Esophagus muscularis mucosa (tissue), 4 donors: ENCODE measurements at regions of chr16 and their contacts with region 1.

Region 1: GRCh38 chr16:57757326-57757786 is 21.8 kb downstream of the KATNB1 start:
- DNase-seq: peak; percentile 96
- H3K4me3 ChIP-seq: no peak overlapping the region
- H3K27ac ChIP-seq: peak overlapping the region in 2 of 4 donors; percentile 27 to 55
- H3K4me1 ChIP-seq: peaks cover 0 to 15% (median 11%) of the 10 kb centered on the region in 4 donors
- H3K27me3 ChIP-seq: no peaks in the 10 kb centered on the region
- CTCF ChIP-seq: peak; percentile 90 to 99 (median 96)
- EP300 ChIP-seq: no peak
- POLR2A ChIP-seq: no peak

Region 2: DNA sequence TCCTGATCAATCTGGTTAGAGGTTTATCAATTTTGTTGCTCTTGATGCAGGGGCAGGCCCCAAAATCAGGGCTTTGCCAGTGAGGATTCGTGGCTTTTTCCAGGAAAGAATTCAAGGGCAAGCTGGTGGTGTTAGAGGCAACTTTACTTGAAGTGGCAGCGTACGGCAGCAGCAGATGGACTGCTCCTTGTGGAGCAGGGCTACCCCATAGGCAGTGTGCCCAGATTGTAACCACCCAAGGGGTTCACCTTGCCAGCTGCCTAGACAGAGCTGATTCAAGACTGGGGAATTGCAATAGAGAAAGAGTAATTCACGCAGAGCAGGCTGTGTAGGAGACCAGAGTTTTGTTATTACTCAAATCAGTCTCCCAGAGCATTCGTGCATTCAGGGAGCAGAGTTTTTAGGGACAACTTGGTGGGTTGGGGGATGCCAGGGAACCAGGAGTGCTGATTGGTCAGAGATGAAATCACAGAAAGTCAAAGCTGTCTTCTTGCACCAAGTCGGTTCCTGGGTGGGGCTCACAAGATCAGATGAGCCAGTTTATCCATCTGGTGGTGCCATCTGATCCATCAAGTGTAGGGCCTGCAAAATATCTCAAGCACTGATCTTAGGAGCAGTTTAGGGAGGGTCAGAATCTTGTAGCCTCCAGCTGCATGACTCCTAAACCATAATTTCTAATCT is 45.9 kb before region 1 on chr16:
- intact Hi-C with region 1: no loop called
- DNase-seq: no peak
- H3K4me3 ChIP-seq: no peak overlapping the region
- H3K27ac ChIP-seq: no peak overlapping the region
- H3K4me1 ChIP-seq: no peaks in the 10 kb centered on the region
- H3K27me3 ChIP-seq: no peaks in the 10 kb centered on the region
- CTCF ChIP-seq: no peak
- EP300 ChIP-seq: no peak
- POLR2A ChIP-seq: no peak

Region 3: DNA sequence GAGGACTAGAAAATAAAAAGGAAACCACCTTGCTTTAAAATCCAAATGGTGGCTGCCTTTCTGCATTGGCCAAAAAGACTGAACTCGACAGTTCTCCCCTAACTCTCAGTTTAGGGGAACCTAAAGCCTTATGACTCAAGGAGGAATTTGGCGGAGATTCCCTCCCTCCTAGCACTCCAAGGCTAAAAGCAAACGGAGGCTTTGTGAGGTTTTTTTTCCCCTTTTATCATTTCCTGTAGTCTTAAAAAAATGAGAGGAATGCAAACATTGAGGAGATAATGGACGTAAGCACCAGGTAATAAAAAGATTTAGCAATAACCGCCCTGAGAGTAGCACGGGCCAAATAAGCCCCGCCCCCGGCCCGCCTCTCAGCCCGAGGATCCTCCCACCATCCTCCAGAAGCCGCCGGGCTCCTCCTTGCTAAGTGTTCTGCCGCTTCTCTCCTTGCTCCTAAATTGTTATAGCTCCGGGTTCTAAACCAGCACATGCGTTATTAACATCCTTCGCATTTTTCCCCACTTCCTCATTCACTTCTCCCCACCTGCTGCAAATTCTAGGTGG is 50.7 kb after region 1 on chr16:
- intact Hi-C with region 1: loop called (anchors 5 kb)
- DNase-seq: peak; percentile 94
- H3K4me3 ChIP-seq: peak overlapping the region; percentile 13 to 38 (median 23)
- H3K27ac ChIP-seq: peak overlapping the region in 3 of 4 donors; percentile 3 to 41 (median 36)
- H3K4me1 ChIP-seq: peaks cover 37 to 50% (median 44%) of the 10 kb centered on the region in 4 donors
- H3K27me3 ChIP-seq: no peaks in the 10 kb centered on the region
- CTCF ChIP-seq: no peak
- EP300 ChIP-seq: no peak
- POLR2A ChIP-seq: no peak

Region 4: DNA sequence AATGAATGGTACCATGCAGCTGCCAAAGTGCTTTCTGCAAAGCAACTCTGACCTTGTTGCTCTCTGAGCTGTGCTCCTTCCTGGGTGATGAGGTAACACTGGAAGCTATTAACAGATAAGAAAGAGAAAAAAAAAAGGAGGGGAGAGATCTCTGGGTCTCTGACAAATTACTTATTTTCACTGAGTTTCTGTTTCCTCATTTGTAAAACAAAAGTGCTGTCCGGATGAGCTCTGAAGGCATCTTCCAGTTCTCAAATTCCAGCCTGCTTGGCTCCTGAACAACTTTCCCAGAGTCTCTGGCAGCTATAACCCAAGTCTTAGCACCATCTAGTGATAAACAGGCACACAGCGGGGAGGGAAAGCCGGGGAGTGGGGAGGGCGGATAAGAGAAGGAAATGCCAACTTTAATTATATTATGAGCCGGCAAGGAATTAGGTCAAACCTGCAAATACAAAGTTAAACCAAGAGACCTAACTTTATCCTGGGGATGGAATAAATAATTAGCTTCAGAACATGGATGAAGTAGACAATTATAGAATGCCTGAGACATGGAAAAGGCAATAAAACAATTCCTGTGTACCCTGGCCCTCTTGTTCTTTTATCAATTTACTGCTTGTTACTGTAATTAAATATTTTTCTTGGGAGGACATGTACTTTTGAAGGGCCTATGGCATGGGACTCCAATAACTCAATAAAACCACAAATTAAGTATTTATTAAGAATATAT is 106.2 kb after region 1 on chr16:
- intact Hi-C with region 1: loop called (anchors 1 kb)
- DNase-seq: no peak
- H3K4me3 ChIP-seq: no peak overlapping the region
- H3K27ac ChIP-seq: no peak overlapping the region
- H3K4me1 ChIP-seq: peaks cover 5 to 12% (median 9%) of the 10 kb centered on the region in 4 donors
- H3K27me3 ChIP-seq: no peaks in the 10 kb centered on the region
- CTCF ChIP-seq: peak; percentile 57 to 72 (median 69)
- EP300 ChIP-seq: no peak
- POLR2A ChIP-seq: no peak

Region 5: GRCh38 chr16:57955572-57956188 is 198.3 kb after region 1 on chr16:
- intact Hi-C with region 1: no loop called
- DNase-seq: no peak
- H3K4me3 ChIP-seq: no peak overlapping the region
- H3K27ac ChIP-seq: no peak overlapping the region
- H3K4me1 ChIP-seq: no peaks in the 10 kb centered on the region
- H3K27me3 ChIP-seq: peaks cover 0 to 12% (median 0%) of the 10 kb centered on the region in 4 donors
- CTCF ChIP-seq: no peak
- EP300 ChIP-seq: no peak
- POLR2A ChIP-seq: no peak